Activated CD8-positive, alpha-beta T cell treated with anti-CD3 and anti-CD28 coated beads for 36 hours (primary cell): ENCODE measurements at regions of chr3 and their contacts with region 1.

Region 1: GRCh38 chr3:196063456-196063855 is 18.4 kb downstream of the TFRC start:
- DNase-seq: no peak
- ATAC-seq: no peak
- H3K4me3 Mint-ChIP-seq: no peak overlapping the region
- H3K27ac Mint-ChIP-seq: peak overlapping the region; percentile 75
- H3K4me1 Mint-ChIP-seq: peaks cover 9% of the 10 kb centered on the region
- H3K27me3 Mint-ChIP-seq: no peaks in the 10 kb centered on the region
- CTCF ChIP-seq: no peak

Region 2: DNA sequence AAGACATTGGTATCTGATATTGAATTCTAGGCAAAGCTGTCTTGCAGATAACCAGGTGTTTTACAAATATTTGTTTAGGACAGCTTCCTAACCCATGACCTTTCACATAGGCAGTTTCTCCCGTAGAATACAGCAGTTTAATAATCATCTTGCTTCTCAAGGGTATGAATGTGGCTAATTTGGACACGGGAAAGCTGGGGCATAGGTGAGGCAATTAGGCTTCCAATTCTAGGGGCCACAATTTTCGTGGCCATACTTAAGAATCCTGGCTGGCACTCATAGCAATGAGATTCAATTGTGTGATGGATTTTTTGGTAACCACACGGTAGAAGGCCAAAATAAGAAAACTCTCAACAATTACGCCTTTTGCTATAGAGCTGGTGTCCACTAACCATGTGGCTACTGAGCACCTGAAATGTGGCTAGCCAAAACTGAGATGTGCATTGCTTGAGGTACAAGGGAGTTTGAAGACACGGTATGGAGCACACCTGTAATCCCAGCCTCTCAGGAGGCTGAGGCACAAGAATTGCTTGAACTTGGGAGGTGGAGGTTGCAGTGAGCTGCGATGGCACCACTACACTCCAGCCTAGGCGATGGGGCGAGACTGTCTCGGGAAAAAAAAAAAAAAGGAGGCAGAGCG is 15.9 kb before region 1 on chr3:
- CTCF ChIA-PET with region 1: no interaction called
- POLR2A ChIA-PET with region 1: interaction called, 21 read pairs
- intact Hi-C with region 1: no loop called
- DNase-seq: no peak
- ATAC-seq: no peak
- H3K4me3 Mint-ChIP-seq: no peak overlapping the region
- H3K27ac Mint-ChIP-seq: no peak overlapping the region
- H3K4me1 Mint-ChIP-seq: peaks cover 8% of the 10 kb centered on the region
- H3K27me3 Mint-ChIP-seq: no peaks in the 10 kb centered on the region
- CTCF ChIP-seq: no peak